A673 (cell line): ENCODE measurements at regions of chr11 and their contacts with region 1.

Region 1: DNA sequence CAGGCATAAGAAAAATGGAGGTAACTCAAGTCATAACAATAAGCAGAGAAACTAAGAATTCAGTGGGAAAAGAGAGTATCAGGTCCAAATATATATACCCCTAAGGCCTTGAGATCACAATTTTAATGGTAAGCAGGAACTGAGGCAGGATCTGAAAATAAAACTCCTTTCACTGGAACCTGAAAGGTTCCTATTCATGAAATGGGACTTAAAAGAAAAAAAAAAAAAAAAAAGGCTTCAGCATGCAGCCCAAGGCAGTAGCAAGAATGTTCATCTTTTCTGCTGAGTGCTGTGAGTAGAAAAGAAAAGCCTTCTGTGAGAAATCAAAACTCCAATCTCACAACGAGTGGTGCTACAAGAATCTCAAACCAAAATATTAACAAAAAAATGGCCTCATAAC is 75.3 kb downstream of the DLG2 start:
- DNase-seq: no peak
- H3K4me3 ChIP-seq: no peak overlapping the region
- H3K27ac ChIP-seq: no peak overlapping the region
- H3K4me1 ChIP-seq: no peaks in the 10 kb centered on the region
- H3K27me3 ChIP-seq: no peaks in the 10 kb centered on the region
- CTCF ChIP-seq: no peak

Region 2: GRCh38 chr11:85569525-85569924 is 17.6 kb after region 1 on chr11:
- CTCF ChIA-PET with region 1: no interaction called
- POLR2A ChIA-PET with region 1: no interaction called
- intact Hi-C with region 1: loop called (anchors 1 kb)
- DNase-seq: no peak
- H3K4me3 ChIP-seq: no peak overlapping the region
- H3K27ac ChIP-seq: no peak overlapping the region
- H3K4me1 ChIP-seq: no peaks in the 10 kb centered on the region
- H3K27me3 ChIP-seq: peaks cover 5% of the 10 kb centered on the region
- CTCF ChIP-seq: no peak

Region 3: GRCh38 chr11:85643191-85643614 is 91.3 kb after region 1 on chr11:
- CTCF ChIA-PET with region 1: no interaction called
- POLR2A ChIA-PET with region 1: no interaction called
- intact Hi-C with region 1: no loop called
- DNase-seq: peak; percentile 51
- H3K4me3 ChIP-seq: no peak overlapping the region
- H3K27ac ChIP-seq: no peak overlapping the region
- H3K4me1 ChIP-seq: peaks cover 15% of the 10 kb centered on the region
- H3K27me3 ChIP-seq: peaks cover 9% of the 10 kb centered on the region
- CTCF ChIP-seq: no peak